ENCODE measurements at regions of chr9 and their contacts with region 1.

Region 1: GRCh38 chr9:112443200-112443599 is 43.4 kb upstream of the KIAA1958 start:
- DNase-seq: peak; percentile 21
- H3K4me3 Mint-ChIP-seq: no peak overlapping the region
- H3K27ac Mint-ChIP-seq: no peak overlapping the region
- H3K4me1 Mint-ChIP-seq: peaks cover 6% of the 10 kb centered on the region
- H3K27me3 Mint-ChIP-seq: no peaks in the 10 kb centered on the region

Region 2: GRCh38 chr9:112422417-112423148 is 20.6 kb before region 1 on chr9:
- CTCF ChIA-PET with region 1: no interaction called
- POLR2A ChIA-PET with region 1: no interaction called
- DNase-seq: no peak
- H3K4me3 Mint-ChIP-seq: no peak overlapping the region
- H3K27ac Mint-ChIP-seq: no peak overlapping the region
- H3K4me1 Mint-ChIP-seq: no peaks in the 10 kb centered on the region
- H3K27me3 Mint-ChIP-seq: no peaks in the 10 kb centered on the region

Region 3: DNA sequence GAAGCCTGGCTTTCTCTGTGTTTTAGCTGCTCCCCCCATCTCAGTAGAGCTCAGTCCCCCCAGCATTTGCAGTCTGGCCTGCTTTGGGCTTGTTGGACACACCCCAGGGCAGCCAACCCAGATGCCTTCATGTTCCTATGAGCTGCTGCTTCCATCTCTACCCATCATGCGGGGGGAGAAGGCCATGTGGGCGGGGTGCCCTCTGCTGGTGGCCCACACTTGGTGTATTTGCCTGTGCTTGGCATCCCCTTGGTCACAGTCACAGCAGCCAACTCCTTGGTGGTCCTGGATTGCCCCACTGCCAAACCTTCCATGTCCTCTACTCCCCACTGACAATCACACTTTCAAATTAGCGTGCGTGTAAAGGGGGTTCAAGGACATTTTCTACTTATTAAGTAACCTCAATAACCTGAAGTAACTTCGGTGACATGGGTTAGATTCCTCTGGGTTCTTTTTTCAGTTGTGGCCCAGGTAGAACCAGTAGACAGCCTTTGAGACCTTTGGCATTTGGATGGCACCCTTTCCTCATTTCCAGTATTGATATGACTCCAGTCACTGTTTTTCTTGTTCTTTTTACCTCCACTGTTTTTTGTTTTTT is 350.1 kb after region 1 on chr9:
- CTCF ChIA-PET with region 1: interaction called, 19 read pairs
- POLR2A ChIA-PET with region 1: no interaction called
- DNase-seq: peak; percentile 85
- H3K4me3 Mint-ChIP-seq: no peak overlapping the region
- H3K27ac Mint-ChIP-seq: no peak overlapping the region
- H3K4me1 Mint-ChIP-seq: peaks cover 6% of the 10 kb centered on the region
- H3K27me3 Mint-ChIP-seq: no peaks in the 10 kb centered on the region

Measured in activated CD4-positive, alpha-beta memory T cell treated with anti-CD3 and anti-CD28 coated beads, Interleukin-2, amount 10 ng/mL, durations not matched to agents 7 days and 5 days (primary cell).